Upper lobe of right lung (tissue), 1 donor: ENCODE measurements at regions of chr13 and their contacts with region 1.

Region 1: DNA sequence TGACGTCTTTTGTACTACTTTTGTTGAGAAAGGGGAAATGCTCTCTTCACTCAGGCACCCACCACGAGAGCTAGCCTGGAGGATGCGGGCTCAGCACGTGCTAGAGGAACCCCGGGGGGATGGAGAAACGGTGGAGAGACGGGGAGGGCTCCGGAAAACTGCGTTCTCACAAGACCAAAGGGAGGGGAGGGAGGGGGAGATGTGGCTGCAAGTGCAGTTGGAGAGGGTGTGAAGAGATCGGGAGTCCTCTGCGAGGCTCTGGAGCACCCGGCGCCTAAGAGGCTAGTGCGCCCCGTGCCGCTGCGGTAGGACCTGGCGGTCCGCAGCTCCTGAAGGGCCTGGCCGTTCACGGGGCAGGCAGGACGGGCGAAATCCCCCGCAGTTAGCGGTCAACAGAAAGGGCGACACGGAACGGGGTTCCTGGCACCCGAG is 43.4 kb upstream of the XPO4 start:
- DNase-seq: peak; percentile 62
- ATAC-seq: peak; percentile 45
- H3K4me3 ChIP-seq: no peak overlapping the region
- H3K27ac ChIP-seq: no peak overlapping the region
- H3K4me1 ChIP-seq: peaks cover 4% of the 10 kb centered on the region
- H3K27me3 ChIP-seq: no peaks in the 10 kb centered on the region
- CTCF ChIP-seq: no peak

Region 2: DNA sequence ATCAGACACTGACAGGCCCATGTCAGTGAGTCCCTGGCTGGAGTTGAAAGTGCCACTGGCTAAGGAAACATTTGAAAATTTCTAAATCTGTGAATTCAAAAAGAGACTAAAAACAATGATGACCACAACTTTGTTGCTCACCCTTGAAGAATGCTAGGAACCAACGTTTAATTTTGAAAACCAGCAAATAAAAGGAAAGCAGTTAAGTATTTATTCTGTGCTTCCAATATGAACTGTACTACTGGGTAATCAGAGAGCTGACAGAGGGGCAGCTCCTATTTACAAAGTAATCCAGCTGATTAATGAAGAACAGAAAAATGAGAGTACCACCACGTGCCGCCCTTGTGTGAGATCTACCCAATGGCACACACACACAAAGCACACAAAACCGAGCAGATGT is 160.1 kb after region 1 on chr13:
- intact Hi-C with region 1: loop called (anchors 10 kb)
- DNase-seq: no peak
- ATAC-seq: no peak
- H3K4me3 ChIP-seq: no peak overlapping the region
- H3K27ac ChIP-seq: no peak overlapping the region
- H3K4me1 ChIP-seq: no peaks in the 10 kb centered on the region
- H3K27me3 ChIP-seq: no peaks in the 10 kb centered on the region
- CTCF ChIP-seq: no peak